Right cardiac atrium (tissue), 5 donors: ENCODE measurements at regions of chr2 and their contacts with region 1.

Region 1: DNA sequence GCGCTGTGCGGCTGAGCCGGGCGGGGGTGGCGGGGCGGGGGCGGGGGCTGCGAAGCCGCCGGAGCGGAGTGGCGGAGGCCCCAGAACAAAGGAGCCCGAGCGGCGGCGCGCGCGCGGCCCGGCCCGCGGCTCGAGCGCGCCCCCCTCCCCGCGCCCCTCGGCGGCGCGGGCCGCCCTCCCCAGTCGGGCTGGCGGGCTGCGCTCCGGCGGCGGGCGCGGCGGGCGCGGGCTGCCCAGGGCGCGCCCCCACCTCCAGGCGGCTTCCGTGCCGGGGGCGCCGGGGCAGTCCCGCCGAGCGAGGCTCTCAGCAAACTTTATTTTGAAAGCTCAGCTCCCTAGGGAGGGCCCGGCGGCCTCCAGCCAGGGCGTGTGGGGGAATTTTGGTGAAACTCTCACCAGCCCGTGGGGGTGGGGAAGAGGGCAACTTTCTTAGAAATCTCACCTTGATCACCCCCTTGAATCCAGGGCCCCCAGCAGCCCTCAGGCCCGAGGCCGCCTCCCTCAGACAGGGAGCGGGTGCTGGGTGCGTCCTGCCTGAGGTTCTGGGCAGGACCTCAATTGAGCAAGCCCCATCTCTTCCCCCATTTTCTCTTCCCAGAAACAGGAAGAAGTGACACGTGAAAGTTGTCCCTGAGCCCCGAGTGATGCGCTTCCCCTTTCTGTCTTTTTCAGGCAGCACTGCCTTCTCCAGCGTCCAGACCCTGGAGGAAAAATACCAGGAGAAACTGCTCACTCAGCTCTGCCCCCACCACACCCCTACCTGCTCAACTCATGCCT is 786 bp downstream of the TET3 start:
- DNase-seq: peak; percentile 52 to 86 (median 83)
- ATAC-seq: peak; percentile 6 to 9
- H3K4me3 ChIP-seq: peak overlapping the region; percentile 96
- H3K27ac ChIP-seq: no peak overlapping the region
- H3K4me1 ChIP-seq: peaks cover 14% of the 10 kb centered on the region
- H3K27me3 ChIP-seq: no peaks in the 10 kb centered on the region

Region 2: DNA sequence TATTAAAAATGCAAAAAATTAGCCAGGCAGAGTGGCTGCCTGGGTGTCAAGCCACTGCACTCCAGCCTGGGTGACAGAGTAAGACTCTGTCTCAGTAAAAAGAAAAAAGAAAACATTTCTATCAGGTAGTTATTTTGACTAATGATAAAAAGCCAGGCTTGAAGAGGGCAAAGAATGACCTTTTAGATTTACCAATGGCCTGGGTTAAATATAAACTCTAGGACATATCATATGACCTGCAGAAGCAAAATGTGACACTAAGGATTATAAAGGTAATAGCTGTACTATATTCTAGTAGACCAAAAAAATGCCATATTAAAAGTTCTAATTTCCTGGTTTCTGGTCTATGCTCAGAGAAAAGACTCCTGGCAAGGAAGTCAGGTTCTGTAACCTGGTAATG is 172.9 kb before region 1 on chr2:
- intact Hi-C with region 1: no loop called
- DNase-seq: no peak
- ATAC-seq: no peak
- H3K4me3 ChIP-seq: no peak overlapping the region
- H3K27ac ChIP-seq: no peak overlapping the region
- H3K4me1 ChIP-seq: no peaks in the 10 kb centered on the region
- H3K27me3 ChIP-seq: no peaks in the 10 kb centered on the region

Region 3: GRCh38 chr2:73926493-73927338 is 58.8 kb before region 1 on chr2 and contains the start of gene DGUOK:
- intact Hi-C with region 1: loop called in 2 of 4 experiments (anchors 10 kb)
- DNase-seq: peak; percentile 98 to 99 (median 98)
- ATAC-seq: peak; percentile 100
- H3K4me3 ChIP-seq: peak within 1 kb of the TSS; percentile 73
- H3K27ac ChIP-seq: peak within 1 kb of the TSS; percentile 84
- H3K4me1 ChIP-seq: peaks cover 8% of the 10 kb centered on the region
- H3K27me3 ChIP-seq: no peaks in the 10 kb centered on the region
- total RNA-seq, gene DGUOK: 20.2 to 29.0 (median 26.7) TPM

Region 4: GRCh38 chr2:73939419-73939818 is 46.1 kb before region 1 on chr2:
- intact Hi-C with region 1: loop called in 1 of 4 experiments (anchors 10 kb)
- DNase-seq: peak in 1 of 3 donors; percentile 50
- ATAC-seq: peak; percentile 82 to 84
- H3K4me3 ChIP-seq: no peak overlapping the region
- H3K27ac ChIP-seq: peak overlapping the region; percentile 3
- H3K4me1 ChIP-seq: peaks cover 7% of the 10 kb centered on the region
- H3K27me3 ChIP-seq: no peaks in the 10 kb centered on the region

Region 5: DNA sequence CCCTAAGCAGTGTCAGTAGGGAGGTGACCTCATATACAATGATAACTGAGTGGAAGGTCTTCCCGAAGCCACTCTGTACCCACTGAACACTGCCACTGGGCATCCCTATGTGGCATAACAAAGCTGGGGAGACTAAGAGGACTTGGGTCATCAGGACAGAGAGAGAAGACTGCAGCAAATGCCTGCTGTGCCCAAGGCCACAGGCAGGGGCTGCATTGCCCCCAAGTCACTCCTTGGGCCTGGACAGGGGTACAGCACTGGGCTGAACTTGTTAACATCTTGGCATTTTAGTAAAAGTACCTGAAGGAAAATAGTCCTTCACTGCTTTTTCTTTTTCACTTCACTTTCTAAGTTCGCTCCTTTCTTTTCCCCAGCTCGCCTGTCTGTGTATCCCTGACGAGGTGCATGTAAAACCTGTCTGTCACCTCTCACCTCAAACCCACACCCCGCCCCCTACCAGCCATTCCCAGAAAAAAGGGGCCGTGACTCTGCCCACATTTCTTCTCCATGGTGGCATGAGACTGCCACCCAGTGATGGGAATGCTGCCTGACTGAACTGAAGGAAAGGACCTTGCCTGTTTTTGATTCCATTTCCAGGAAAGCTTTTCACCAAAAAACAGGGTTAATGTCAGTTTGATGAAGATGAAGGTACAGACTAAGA is 275.8 kb after region 1 on chr2:
- intact Hi-C with region 1: no loop called
- DNase-seq: peak in 1 of 3 donors; percentile 70
- ATAC-seq: peak; percentile 30 to 63
- H3K4me3 ChIP-seq: no peak overlapping the region
- H3K27ac ChIP-seq: no peak overlapping the region
- H3K4me1 ChIP-seq: no peaks in the 10 kb centered on the region
- H3K27me3 ChIP-seq: no peaks in the 10 kb centered on the region